ENCODE measurements at regions of chr4 and their contacts with region 1.

Region 1: GRCh38 chr4:37561803-37562207 is 124.4 kb downstream of the RELL1 start:
- DNase-seq: no peak
- ATAC-seq: no peak
- H3K4me3 ChIP-seq: no peak overlapping the region
- H3K27ac ChIP-seq: no peak overlapping the region
- H3K4me1 ChIP-seq: no peaks in the 10 kb centered on the region
- H3K27me3 ChIP-seq: no peaks in the 10 kb centered on the region
- CTCF ChIP-seq: no peak
- POLR2A ChIP-seq: no peak

Region 2: DNA sequence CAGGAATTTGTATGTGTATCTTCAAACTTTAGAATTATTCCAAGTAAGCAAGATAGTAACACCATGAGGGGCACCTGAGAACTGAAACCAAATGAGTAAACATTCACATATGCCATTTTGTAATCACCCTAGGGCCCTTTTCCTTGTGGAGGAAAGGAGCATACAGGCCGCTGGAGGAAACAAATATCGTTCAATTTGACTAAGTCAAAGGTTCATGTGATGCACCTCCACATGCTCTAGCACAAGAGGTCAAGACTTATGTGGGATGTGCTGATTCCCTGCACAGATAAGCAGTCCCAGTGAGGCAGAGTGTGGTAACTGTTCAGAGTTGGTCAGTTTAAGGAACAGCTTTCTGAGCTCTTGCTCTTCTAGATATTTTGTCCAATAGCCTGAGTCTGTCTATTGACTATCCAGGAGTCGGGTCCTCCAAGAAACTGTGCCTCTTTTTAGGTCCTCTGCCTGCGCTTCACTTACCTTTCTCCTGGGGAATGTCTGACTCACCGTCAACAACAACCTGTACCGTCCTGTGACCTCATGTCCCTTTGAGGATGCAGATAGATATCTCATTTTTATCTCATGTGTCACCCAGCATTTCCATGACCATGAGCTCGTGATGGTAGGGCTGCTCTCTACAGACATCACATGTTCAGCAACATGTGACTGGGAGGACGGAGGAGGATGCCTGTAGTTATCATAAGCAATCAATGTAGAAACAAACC is 120.4 kb before region 1 on chr4:
- intact Hi-C with region 1: loop called (anchors 10 kb)
- DNase-seq: no peak
- ATAC-seq: peak; percentile 27
- H3K4me3 ChIP-seq: no peak overlapping the region
- H3K27ac ChIP-seq: no peak overlapping the region
- H3K4me1 ChIP-seq: peaks cover 19% of the 10 kb centered on the region
- H3K27me3 ChIP-seq: no peaks in the 10 kb centered on the region
- CTCF ChIP-seq: no peak
- POLR2A ChIP-seq: no peak

Region 3: DNA sequence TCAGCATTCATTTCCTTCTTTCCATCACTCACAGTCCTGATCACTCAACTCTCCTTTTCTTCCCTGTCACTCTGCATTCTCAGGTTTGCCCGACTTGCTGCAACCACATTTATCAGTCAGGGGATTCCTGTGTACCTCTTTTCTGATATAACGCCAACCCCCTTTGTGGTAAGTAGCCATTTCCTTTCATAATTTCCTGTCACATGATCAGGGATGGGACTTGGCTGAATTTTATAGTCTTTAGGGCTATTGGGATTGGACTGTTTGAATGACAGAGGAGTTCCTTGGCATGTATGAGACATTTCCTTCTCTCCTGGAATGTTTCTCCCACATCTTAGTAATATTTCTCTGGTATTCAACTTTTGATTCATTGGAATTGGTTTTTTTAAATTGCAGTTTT is 275.6 kb after region 1 on chr4:
- intact Hi-C with region 1: no loop called
- DNase-seq: no peak
- ATAC-seq: peak; percentile 50
- H3K4me3 ChIP-seq: no peak overlapping the region
- H3K27ac ChIP-seq: no peak overlapping the region
- H3K4me1 ChIP-seq: no peaks in the 10 kb centered on the region
- H3K27me3 ChIP-seq: no peaks in the 10 kb centered on the region
- CTCF ChIP-seq: no peak
- POLR2A ChIP-seq: no peak